ENCODE measurements at regions of chr16 and their contacts with region 1.

Region 1: GRCh38 chr16:4874666-4875065 is 27.4 kb downstream of the UBN1 start:
- DNase-seq: no peak
- CTCF ChIP-seq: no peak

Region 2: DNA sequence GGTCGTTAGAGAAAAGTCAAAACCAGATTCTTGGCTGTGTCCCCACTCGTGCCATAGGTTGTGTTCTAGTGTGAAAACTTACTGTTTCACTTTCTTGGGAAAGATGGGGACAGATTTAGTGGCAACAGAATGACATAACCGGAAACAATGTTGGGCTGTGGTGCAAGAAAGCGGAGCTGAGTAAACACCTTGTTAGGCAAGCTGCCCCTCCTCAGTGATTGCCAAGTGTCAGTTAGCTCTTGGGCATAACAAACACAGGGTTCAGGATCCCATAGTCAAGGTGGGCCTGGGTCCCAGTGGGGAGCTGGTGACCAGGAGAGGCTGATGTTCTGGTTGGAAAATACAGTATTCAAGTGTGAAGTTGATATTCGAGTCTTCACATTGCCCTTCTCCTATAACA is 12.0 kb before region 1 on chr16:
- CTCF ChIA-PET with region 1: interaction called, 11 read pairs
- POLR2A ChIA-PET with region 1: no interaction called
- DNase-seq: no peak
- CTCF ChIP-seq: no peak